Transverse colon (tissue), 4 donors: ENCODE measurements at regions of chr17 and their contacts with region 1.

Region 1: GRCh38 chr17:53722407-53722806 is 100.3 kb upstream of the KIF2B start:
- DNase-seq: no peak
- H3K4me3 ChIP-seq: no peak overlapping the region
- H3K27ac ChIP-seq: no peak overlapping the region
- H3K4me1 ChIP-seq: no peaks in the 10 kb centered on the region
- H3K27me3 ChIP-seq: no peaks in the 10 kb centered on the region
- CTCF ChIP-seq: no peak
- EP300 ChIP-seq: no peak
- POLR2A ChIP-seq: no peak

Region 2: DNA sequence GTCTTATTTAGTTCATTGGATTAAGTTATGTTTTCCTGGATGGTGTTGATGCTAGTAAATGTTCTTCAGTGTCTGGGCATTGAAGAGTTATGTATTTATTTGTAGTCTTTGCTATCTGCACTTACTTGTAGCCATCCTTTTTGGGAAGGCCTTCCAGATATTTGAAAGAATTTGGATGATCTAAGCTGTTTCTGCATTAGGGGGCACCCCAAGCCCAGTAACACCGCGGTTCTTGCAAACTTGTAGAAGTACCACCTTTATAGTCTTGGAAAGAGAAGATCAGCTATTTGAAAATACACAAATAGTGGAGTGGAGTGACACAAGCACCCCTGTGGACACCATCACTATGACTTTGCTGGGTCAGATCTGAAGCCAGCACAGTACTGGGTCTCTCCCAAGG is 75.6 kb before region 1 on chr17:
- in situ Hi-C with region 1: no loop called
- intact Hi-C with region 1: no loop called
- DNase-seq: no peak
- H3K4me3 ChIP-seq: no peak overlapping the region
- H3K27ac ChIP-seq: no peak overlapping the region
- H3K4me1 ChIP-seq: no peaks in the 10 kb centered on the region
- H3K27me3 ChIP-seq: no peaks in the 10 kb centered on the region
- CTCF ChIP-seq: no peak
- EP300 ChIP-seq: no peak
- POLR2A ChIP-seq: no peak

Region 3: GRCh38 chr17:53819956-53820355 is 97.5 kb after region 1 on chr17:
- in situ Hi-C with region 1: loop called in 1 of 4 experiments (anchors 25 kb)
- intact Hi-C with region 1: no loop called
- DNase-seq: no peak
- H3K4me3 ChIP-seq: no peak overlapping the region
- H3K27ac ChIP-seq: no peak overlapping the region
- H3K4me1 ChIP-seq: no peaks in the 10 kb centered on the region
- H3K27me3 ChIP-seq: no peaks in the 10 kb centered on the region
- CTCF ChIP-seq: no peak
- EP300 ChIP-seq: no peak
- POLR2A ChIP-seq: no peak

Region 4: GRCh38 chr17:54063639-54064038 is 341.2 kb after region 1 on chr17:
- in situ Hi-C with region 1: loop called in 1 of 4 experiments (anchors 25 kb)
- intact Hi-C with region 1: no loop called
- DNase-seq: no peak
- H3K4me3 ChIP-seq: no peak overlapping the region
- H3K27ac ChIP-seq: no peak overlapping the region
- H3K4me1 ChIP-seq: no peaks in the 10 kb centered on the region
- H3K27me3 ChIP-seq: no peaks in the 10 kb centered on the region
- CTCF ChIP-seq: no peak
- EP300 ChIP-seq: no peak
- POLR2A ChIP-seq: no peak